MCF 10A (cell line): ENCODE measurements at regions of chr9 and their contacts with region 1.

Region 1: GRCh38 chr9:2014696-2015580 is at the start of gene SMARCA2:
- DNase-seq: peak; percentile 96
- H3K4me3 Mint-ChIP-seq: peak within 1 kb of the TSS; percentile 90
- H3K27ac Mint-ChIP-seq: peak within 1 kb of the TSS; percentile 80
- H3K4me1 Mint-ChIP-seq: peaks cover 24% of the 10 kb centered on the region
- H3K27me3 Mint-ChIP-seq: peaks cover 10% of the 10 kb centered on the region
- CTCF ChIP-seq: no peak
- total RNA-seq, gene SMARCA2: 75.6 and 77.6 TPM in 2 replicates

Region 2: DNA sequence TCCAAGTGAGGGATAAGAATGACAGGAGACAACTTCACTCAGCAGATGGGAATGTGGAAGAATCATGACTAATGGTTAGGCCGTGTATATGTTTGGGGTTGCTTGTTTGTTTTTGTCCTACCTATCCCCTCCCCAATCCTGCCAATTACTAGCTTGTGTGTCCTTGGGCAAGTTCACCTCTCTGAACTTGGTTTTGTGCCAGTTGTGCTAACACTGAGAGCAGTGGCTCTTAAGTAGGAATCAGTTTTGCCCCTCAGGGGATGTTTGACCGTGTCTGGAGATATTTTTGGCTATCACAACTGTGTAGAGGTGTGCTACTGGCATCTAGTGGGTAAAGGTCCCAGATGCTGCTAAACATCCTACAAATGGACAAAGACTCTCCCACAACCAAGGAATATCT is 677.8 kb before region 1 on chr9:
- CTCF ChIA-PET with region 1: no interaction called
- POLR2A ChIA-PET with region 1: no interaction called
- intact Hi-C with region 1: no loop called
- DNase-seq: peak; percentile 79
- H3K4me3 Mint-ChIP-seq: no peak overlapping the region
- H3K27ac Mint-ChIP-seq: no peak overlapping the region
- H3K4me1 Mint-ChIP-seq: no peaks in the 10 kb centered on the region
- H3K27me3 Mint-ChIP-seq: no peaks in the 10 kb centered on the region
- CTCF ChIP-seq: peak; percentile 7

Region 3: GRCh38 chr9:1979741-1980367 is 35.1 kb before region 1 on chr9:
- CTCF ChIA-PET with region 1: no interaction called
- POLR2A ChIA-PET with region 1: interaction called, 57 read pairs
- intact Hi-C with region 1: loop called (anchors 1 kb)
- DNase-seq: peak; percentile 75
- H3K4me3 Mint-ChIP-seq: no peak overlapping the region
- H3K27ac Mint-ChIP-seq: peak overlapping the region; percentile 42
- H3K4me1 Mint-ChIP-seq: peaks cover 26% of the 10 kb centered on the region
- H3K27me3 Mint-ChIP-seq: no peaks in the 10 kb centered on the region
- CTCF ChIP-seq: no peak

Region 4: GRCh38 chr9:2026220-2026997 is 11.5 kb after region 1 on chr9:
- CTCF ChIA-PET with region 1: interaction called, 4 read pairs
- POLR2A ChIA-PET with region 1: interaction called, 14 read pairs
- intact Hi-C with region 1: no loop called
- DNase-seq: no peak
- H3K4me3 Mint-ChIP-seq: no peak overlapping the region
- H3K27ac Mint-ChIP-seq: no peak overlapping the region
- H3K4me1 Mint-ChIP-seq: peaks cover 28% of the 10 kb centered on the region
- H3K27me3 Mint-ChIP-seq: no peaks in the 10 kb centered on the region
- CTCF ChIP-seq: no peak

Region 5: GRCh38 chr9:2158111-2158610 is 143.2 kb after region 1 on chr9:
- CTCF ChIA-PET with region 1: no interaction called
- POLR2A ChIA-PET with region 1: interaction called, 7 read pairs
- intact Hi-C with region 1: loop called (anchors 5 kb)
- DNase-seq: peak; percentile 87
- H3K4me3 Mint-ChIP-seq: peak overlapping the region; percentile 80
- H3K27ac Mint-ChIP-seq: peak overlapping the region; percentile 91
- H3K4me1 Mint-ChIP-seq: peaks cover 28% of the 10 kb centered on the region
- H3K27me3 Mint-ChIP-seq: no peaks in the 10 kb centered on the region
- CTCF ChIP-seq: no peak